ENCODE measurements at regions of chr1 and their contacts with region 1.

Region 1: GRCh38 chr1:64282354-64282753 is 78.9 kb downstream of the UBE2U start:
- DNase-seq: peak; percentile 92
- ATAC-seq: peak; percentile 16; the same call in 1 of the 2 replicates
- H3K4me3 ChIP-seq: no peak overlapping the region
- H3K27ac ChIP-seq: peak overlapping the region; percentile 73
- H3K4me1 ChIP-seq: peaks cover 43% of the 10 kb centered on the region
- H3K27me3 ChIP-seq: no peaks in the 10 kb centered on the region
- CTCF ChIP-seq: no peak

Region 2: GRCh38 chr1:64223329-64224151 is 58.8 kb before region 1 on chr1:
- CTCF ChIA-PET with region 1: no interaction called
- POLR2A ChIA-PET with region 1: no interaction called
- intact Hi-C with region 1: no loop called
- DNase-seq: peak; percentile 87
- ATAC-seq: peak; percentile 76
- H3K4me3 ChIP-seq: peak overlapping the region; percentile 9; the same call in 1 of the 2 replicates
- H3K27ac ChIP-seq: peak overlapping the region; percentile 84
- H3K4me1 ChIP-seq: peaks cover 18% of the 10 kb centered on the region
- H3K27me3 ChIP-seq: no peaks in the 10 kb centered on the region
- CTCF ChIP-seq: no peak

Region 3: GRCh38 chr1:64343105-64343887 is 60.9 kb after region 1 on chr1:
- CTCF ChIA-PET with region 1: interaction called, 3 read pairs
- POLR2A ChIA-PET with region 1: no interaction called
- intact Hi-C with region 1: loop called (anchors 1 kb)
- DNase-seq: peak; percentile 99
- ATAC-seq: peak; percentile 89
- H3K4me3 ChIP-seq: peak overlapping the region; percentile 31
- H3K27ac ChIP-seq: peak overlapping the region; percentile 97
- H3K4me1 ChIP-seq: peaks cover 36% of the 10 kb centered on the region
- H3K27me3 ChIP-seq: no peaks in the 10 kb centered on the region
- CTCF ChIP-seq: no peak

Region 4: GRCh38 chr1:64469977-64470664 is 187.8 kb after region 1 on chr1 and contains the start of gene CACHD1:
- CTCF ChIA-PET with region 1: no interaction called
- POLR2A ChIA-PET with region 1: no interaction called
- intact Hi-C with region 1: loop called (anchors 5 kb)
- DNase-seq: peak; percentile 75
- ATAC-seq: peak; percentile 81
- H3K4me3 ChIP-seq: peak within 1 kb of the TSS; percentile 89
- H3K27ac ChIP-seq: no peak within 1 kb of the TSS
- H3K4me1 ChIP-seq: peaks cover 25% of the 10 kb centered on the region
- H3K27me3 ChIP-seq: no peaks in the 10 kb centered on the region
- CTCF ChIP-seq: no peak
- total RNA-seq, gene CACHD1: 6.6 TPM in 2 replicates

Region 5: GRCh38 chr1:64484651-64485050 is 202.3 kb after region 1 on chr1:
- CTCF ChIA-PET with region 1: no interaction called
- POLR2A ChIA-PET with region 1: no interaction called
- intact Hi-C with region 1: loop called (anchors 5 kb)
- DNase-seq: peak; percentile 96
- ATAC-seq: peak; percentile 87
- H3K4me3 ChIP-seq: peak overlapping the region; percentile 29; the same call in 1 of the 2 replicates
- H3K27ac ChIP-seq: peak overlapping the region; percentile 43
- H3K4me1 ChIP-seq: peaks cover 15% of the 10 kb centered on the region
- H3K27me3 ChIP-seq: no peaks in the 10 kb centered on the region
- CTCF ChIP-seq: no peak

Region 6: DNA sequence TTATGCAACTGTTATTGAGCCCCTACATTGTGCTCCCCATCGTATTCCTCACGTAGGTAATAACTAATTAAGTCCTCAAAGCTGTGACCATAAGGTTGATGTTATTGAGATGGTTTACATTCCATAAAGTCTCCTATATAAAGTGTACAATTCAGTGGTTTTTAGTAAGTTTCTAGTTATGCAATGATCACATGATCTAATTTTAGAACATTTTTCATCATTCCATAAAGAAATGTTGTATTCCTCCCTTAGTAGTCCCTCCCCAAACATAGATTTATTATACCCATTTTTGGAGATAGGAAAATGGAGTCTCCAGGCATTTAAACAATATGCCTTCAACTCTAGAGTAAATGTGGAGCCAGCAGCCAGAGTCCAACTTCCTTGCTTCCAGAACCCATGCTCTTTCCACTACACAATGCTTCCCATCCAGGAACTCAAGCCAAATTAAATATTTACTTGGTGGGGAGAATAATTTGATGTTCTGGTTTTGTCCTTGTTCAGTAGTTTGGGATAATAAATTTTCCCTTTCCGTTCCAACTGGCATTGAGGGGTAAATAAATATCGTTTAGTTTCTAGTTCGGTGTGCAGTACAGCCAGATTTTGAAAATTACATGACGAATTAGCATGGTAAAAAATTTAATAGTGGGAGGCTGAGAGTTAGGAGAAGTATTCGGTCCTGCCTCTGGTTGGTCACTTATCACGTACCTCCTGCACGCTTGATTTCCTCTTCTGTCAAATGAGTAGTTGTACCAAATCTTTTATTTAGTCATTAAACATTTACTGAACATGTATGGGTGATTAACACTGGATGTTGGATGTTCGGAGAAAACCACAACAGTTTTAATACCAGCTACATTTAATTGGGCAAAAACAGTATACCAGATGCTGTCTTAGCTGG is 253.8 kb after region 1 on chr1:
- CTCF ChIA-PET with region 1: no interaction called
- POLR2A ChIA-PET with region 1: no interaction called
- intact Hi-C with region 1: loop called (anchors 1 kb)
- DNase-seq: peak; percentile 65
- ATAC-seq: peak; percentile 84
- H3K4me3 ChIP-seq: peak overlapping the region; percentile 16; the same call in 1 of the 2 replicates
- H3K27ac ChIP-seq: peak overlapping the region; percentile 4; the same call in 1 of the 2 replicates
- H3K4me1 ChIP-seq: peaks cover 21% of the 10 kb centered on the region
- H3K27me3 ChIP-seq: no peaks in the 10 kb centered on the region
- CTCF ChIP-seq: no peak

Measured in PC-3 (cell line).